ENCODE measurements at regions of chr11 and their contacts with region 1.

Region 1: GRCh38 chr11:64935359-64936081 is at the start of gene GPHA2:
- DNase-seq: peak; percentile 48 to 75 (median 61)
- H3K4me3 ChIP-seq: no peak within 1 kb of the TSS
- H3K27ac ChIP-seq: peak within 1 kb of the TSS; percentile 12 to 50
- H3K4me1 ChIP-seq: peaks cover 7% of the 10 kb centered on the region
- H3K27me3 ChIP-seq: no peaks in the 10 kb centered on the region
- CTCF ChIP-seq: no peak
- EP300 ChIP-seq: no peak
- POLR2A ChIP-seq: no peak
- total RNA-seq, gene GPHA2: 0.45 to 1.6 (median 0.88) TPM in 6 of 7 donors, not detected in the other

Region 2: DNA sequence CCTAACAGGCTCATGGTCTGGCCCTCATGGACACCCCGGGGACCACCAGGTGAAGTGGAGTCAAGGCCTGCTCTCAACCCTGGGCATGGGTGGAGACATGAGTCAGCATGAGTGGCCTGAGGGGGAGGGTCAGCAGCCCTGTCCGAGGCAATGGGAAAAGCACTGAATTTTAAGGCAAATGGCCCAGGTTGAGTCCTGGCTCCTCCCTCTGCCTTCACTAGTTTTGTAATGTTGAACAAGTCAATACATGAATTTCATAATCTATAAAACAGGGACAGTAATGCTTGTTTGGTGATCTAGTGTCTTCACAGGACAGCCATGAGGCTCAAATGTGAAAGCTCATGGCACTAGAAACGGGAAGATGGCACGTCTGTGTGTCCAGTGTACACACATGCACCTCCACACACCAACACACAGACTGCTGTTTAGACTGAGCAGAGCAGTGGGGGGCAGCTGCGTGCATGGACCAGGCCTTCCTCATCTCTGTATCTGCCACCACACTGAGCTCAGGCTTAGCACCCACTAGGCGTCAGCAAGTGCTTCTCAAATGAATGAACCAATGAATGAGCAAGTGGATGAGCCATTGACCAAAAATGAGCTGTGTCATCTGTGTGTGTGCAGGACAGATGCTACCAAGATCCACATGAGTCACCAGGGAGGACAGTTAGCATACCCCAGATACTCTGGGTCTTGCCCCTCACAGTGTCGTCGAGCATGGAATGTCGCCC is 275.9 kb before region 1 on chr11:
- intact Hi-C with region 1: no loop called
- DNase-seq: no peak
- H3K4me3 ChIP-seq: no peak overlapping the region
- H3K27ac ChIP-seq: no peak overlapping the region
- H3K4me1 ChIP-seq: no peaks in the 10 kb centered on the region
- H3K27me3 ChIP-seq: no peaks in the 10 kb centered on the region
- CTCF ChIP-seq: no peak
- EP300 ChIP-seq: no peak
- POLR2A ChIP-seq: no peak

Region 3: DNA sequence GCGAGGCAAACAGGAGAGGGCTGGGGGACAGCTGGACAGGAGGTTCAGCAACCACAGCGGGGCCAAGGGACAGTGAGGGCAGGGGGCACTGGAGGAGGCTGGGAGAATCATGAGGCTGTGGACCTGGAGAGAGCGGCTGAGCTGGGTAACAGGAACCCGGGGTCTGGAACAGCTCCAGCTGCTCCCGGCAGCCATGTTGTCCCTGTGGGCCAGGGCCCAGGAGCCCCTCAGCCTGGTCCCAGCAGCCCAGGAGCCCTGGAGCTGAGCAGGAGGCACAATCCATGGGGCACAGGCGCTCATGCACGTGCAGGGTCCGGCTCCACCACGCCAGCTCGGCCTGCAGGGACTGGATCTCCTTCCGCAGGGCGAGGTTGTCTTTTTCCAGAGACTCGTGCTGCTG is 53.9 kb after region 1 on chr11:
- intact Hi-C with region 1: loop called in 1 of 4 experiments (anchors 10 kb)
- DNase-seq: no peak
- H3K4me3 ChIP-seq: no peak overlapping the region
- H3K27ac ChIP-seq: no peak overlapping the region
- H3K4me1 ChIP-seq: no peaks in the 10 kb centered on the region
- H3K27me3 ChIP-seq: no peaks in the 10 kb centered on the region
- CTCF ChIP-seq: no peak
- EP300 ChIP-seq: no peak
- POLR2A ChIP-seq: no peak

Measured in ovary (tissue), 10 donors.